Transverse colon (tissue), 4 donors: ENCODE measurements at regions of chr18 and their contacts with region 1.

Region 1: DNA sequence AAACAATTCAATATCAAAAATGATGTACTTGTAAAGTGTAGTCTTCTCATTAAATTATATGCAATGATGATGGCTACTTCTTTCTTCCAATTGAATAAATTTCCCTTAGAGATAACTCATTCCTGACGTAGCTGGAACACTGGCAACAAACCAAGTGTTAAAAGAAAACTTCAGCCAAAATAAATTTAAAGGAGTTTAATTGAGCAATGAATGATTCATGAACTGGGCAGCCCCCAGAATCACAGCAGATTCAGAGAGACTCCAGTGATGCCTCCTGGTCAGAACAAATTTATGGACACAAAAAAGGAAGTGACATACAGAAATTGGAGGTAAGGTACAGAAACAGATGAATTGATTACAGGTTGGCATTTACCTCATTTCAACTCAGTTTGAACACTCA is 276.5 kb downstream of the DSC3 start:
- DNase-seq: no peak
- H3K4me3 ChIP-seq: no peak overlapping the region
- H3K27ac ChIP-seq: no peak overlapping the region
- H3K4me1 ChIP-seq: peaks cover 0 to 8% (median 0%) of the 10 kb centered on the region in 4 donors
- H3K27me3 ChIP-seq: no peaks in the 10 kb centered on the region
- CTCF ChIP-seq: no peak
- EP300 ChIP-seq: no peak
- POLR2A ChIP-seq: no peak

Region 2: GRCh38 chr18:30705943-30706342 is 60.1 kb before region 1 on chr18:
- in situ Hi-C with region 1: no loop called
- intact Hi-C with region 1: loop called (anchors 2 kb)
- DNase-seq: no peak
- H3K4me3 ChIP-seq: no peak overlapping the region
- H3K27ac ChIP-seq: no peak overlapping the region
- H3K4me1 ChIP-seq: no peaks in the 10 kb centered on the region
- H3K27me3 ChIP-seq: no peaks in the 10 kb centered on the region
- CTCF ChIP-seq: no peak
- EP300 ChIP-seq: no peak
- POLR2A ChIP-seq: no peak

Region 3: GRCh38 chr18:31386741-31387140 is 620.7 kb after region 1 on chr18:
- in situ Hi-C with region 1: no loop called
- intact Hi-C with region 1: no loop called
- DNase-seq: no peak
- H3K4me3 ChIP-seq: no peak overlapping the region
- H3K27ac ChIP-seq: no peak overlapping the region
- H3K4me1 ChIP-seq: no peaks in the 10 kb centered on the region
- H3K27me3 ChIP-seq: no peaks in the 10 kb centered on the region
- CTCF ChIP-seq: no peak
- EP300 ChIP-seq: no peak
- POLR2A ChIP-seq: no peak